HCT116 (cell line): ENCODE measurements at regions of chr22 and their contacts with region 1.

Region 1: GRCh38 chr22:45638834-45639746 is 32.5 kb upstream of the ATXN10 start:
- DNase-seq: peak; percentile 49
- ATAC-seq: peak; percentile 84
- H3K4me3 ChIP-seq: peak overlapping the region in 1 of 2 experiments; percentile 42; a peak in 1 of 4 replicates
- H3K27ac ChIP-seq: peak overlapping the region; percentile 49
- H3K4me1 ChIP-seq: peaks cover 18 to 38% of the 10 kb centered on the region in 2 experiments
- H3K27me3 ChIP-seq: no peaks in the 10 kb centered on the region
- CTCF ChIP-seq: peak in 1 of 3 experiments; percentile 10; a peak in 1 of 6 replicates
- POLR2A ChIP-seq: no peak
- RAD21 ChIP-seq: peak; percentile 23; the same call in 1 of the 2 replicates

Region 2: GRCh38 chr22:45577746-45578523 is 61.2 kb before region 1 on chr22:
- CTCF ChIA-PET with region 1: interaction called, 8 read pairs
- POLR2A ChIA-PET with region 1: no interaction called
- RAD21 ChIA-PET with region 1: no interaction called
- intact Hi-C with region 1: loop called (anchors 2 kb)
- DNase-seq: peak; percentile 68
- ATAC-seq: peak; percentile 94
- H3K4me3 ChIP-seq: no peak overlapping the region
- H3K27ac ChIP-seq: no peak overlapping the region
- H3K4me1 ChIP-seq: peaks cover 0 to 10% of the 10 kb centered on the region in 2 experiments; a peak in 1 of 4 replicates
- H3K27me3 ChIP-seq: no peaks in the 10 kb centered on the region
- CTCF ChIP-seq: peak; percentile 91 to 98 (median 93)
- POLR2A ChIP-seq: no peak
- RAD21 ChIP-seq: peak; percentile 99

Region 3: DNA sequence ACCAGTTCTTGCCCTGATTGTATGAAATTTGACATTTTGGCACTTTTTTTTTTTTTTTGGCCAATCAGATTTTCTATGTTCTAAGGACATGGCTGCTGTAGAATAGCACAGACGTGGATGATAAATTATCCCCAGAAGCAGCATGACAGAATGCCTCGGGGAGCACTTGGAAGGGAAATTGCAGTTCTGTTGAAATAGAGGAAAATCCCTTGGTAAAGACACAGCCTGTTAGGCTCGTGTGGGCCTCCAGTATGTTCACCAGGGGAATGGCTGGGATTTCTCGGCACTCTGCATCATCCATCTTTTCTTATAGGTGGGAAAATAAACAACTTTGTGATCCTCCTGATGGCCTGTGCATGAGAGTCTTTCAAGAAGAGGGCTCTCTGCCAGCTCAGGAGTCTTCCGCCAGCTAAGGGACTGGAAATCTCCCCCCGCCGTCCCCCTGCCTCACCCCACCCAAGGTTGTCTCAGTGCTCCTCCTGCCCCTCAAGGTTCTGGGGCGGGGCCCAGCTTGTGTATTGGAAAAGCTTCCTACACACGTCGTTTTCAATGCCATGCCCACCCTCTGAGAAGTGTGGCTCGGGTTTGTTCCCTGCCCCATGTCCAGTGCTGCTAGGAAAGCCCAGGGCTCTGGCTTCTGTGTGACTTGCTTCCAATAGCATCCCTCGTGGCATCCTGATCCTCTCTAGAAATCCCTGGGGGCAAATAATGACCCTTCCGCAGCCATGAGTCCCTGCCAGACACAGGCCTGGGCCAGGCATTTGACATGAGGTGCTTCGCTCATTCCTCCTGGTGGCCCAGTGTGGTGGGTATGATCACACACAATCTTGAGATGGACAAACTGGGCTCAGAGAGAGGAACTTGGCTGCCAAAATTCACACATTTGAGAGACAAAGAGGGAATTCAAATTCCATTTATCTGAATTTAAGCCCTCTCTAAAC is 38.0 kb before region 1 on chr22:
- CTCF ChIA-PET with region 1: no interaction called
- POLR2A ChIA-PET with region 1: no interaction called
- RAD21 ChIA-PET with region 1: no interaction called
- intact Hi-C with region 1: no loop called
- DNase-seq: no peak
- ATAC-seq: no peak
- H3K4me3 ChIP-seq: no peak overlapping the region
- H3K27ac ChIP-seq: no peak overlapping the region
- H3K4me1 ChIP-seq: peaks cover 36 to 42% of the 10 kb centered on the region in 2 experiments
- H3K27me3 ChIP-seq: no peaks in the 10 kb centered on the region
- CTCF ChIP-seq: no peak
- POLR2A ChIP-seq: no peak
- RAD21 ChIP-seq: no peak

Region 4: DNA sequence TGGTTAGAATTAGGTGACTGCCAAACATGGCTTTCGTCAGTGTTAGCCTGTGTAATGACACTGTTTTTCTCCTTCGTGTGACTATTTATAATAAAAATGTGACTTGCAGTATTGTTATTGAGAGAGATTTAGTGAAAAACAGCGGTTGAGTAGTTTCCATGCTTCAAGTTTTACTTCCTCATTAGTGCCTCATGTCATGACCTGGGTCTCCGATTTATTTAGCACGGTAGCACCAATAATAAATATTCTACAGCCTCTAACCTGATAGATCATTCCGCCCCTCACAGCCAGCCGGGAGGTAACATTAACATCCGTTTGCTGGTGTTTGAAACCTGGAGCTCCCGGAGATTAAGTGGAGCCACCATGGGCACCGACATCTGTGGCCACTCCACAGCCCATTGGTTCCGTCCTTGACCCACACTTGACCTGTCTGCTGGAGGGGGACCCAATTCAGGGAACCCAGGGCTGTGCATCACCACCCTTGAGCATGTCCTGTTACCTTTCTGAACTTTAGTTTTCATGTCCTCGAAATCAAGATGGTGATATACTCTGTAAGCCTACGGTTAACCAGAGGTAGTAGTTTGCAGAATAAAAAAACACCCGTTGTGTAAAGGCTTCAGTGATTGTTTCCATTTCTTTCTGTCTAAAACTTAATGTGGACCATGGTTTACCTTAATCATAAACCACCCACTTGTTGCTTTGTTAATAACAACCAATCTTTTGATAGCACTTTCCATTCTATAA is 136.7 kb after region 1 on chr22:
- CTCF ChIA-PET with region 1: no interaction called
- POLR2A ChIA-PET with region 1: no interaction called
- RAD21 ChIA-PET with region 1: no interaction called
- intact Hi-C with region 1: no loop called
- DNase-seq: no peak
- ATAC-seq: no peak
- H3K4me3 ChIP-seq: no peak overlapping the region
- H3K27ac ChIP-seq: no peak overlapping the region
- H3K4me1 ChIP-seq: no peaks in the 10 kb centered on the region
- H3K27me3 ChIP-seq: no peaks in the 10 kb centered on the region
- CTCF ChIP-seq: no peak
- POLR2A ChIP-seq: no peak
- RAD21 ChIP-seq: no peak